Activated B cell treated with CpG ODN at 0.5 μM for 24 hours (primary cell): ENCODE measurements at regions of chr10 and their contacts with region 1.

Region 1: DNA sequence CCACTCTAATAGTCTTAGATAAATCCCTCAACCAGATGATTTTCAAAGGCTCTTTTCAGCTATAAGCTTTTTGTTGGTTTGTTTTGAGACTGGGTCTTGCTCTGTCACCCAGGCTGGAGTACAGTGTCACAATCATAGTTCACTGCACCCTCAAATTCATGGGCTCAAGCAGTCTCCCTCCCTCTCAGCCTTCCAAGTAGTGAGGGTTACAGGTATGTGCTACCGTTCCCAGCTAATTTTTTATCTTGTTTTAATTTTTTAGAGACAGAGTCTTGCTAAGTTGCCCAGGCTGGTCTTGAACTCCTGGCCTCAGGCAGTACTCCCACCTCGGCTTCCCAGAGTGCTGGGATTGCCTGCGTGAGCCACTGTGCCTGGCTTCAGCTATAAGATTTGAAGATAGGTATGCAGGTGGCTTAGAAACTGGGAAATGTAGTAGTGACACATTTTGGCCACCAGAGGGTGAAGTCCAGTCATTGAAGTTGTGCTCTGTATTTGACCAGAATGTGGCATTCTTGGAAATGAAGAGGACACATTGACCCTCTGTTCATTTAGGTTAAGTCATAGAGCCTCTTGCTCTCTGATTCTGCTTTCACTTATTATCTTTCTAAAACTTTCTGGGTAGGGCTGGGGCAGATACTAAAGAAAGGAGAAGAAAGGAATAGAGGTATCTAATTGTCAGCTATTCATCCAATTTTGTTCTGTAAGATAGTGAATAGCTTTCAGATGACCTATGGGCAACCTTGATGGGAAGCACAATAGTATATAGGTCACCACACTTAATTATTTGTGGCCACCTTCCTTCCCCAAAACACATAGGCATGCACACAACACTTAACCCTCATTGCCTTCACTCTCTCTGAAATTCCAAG is 36.0 kb downstream of the R3HCC1L start:
- DNase-seq: no peak
- ATAC-seq: peak; percentile 58
- H3K4me3 Mint-ChIP-seq: no peak overlapping the region
- H3K27ac Mint-ChIP-seq: no peak overlapping the region
- H3K4me1 Mint-ChIP-seq: peaks cover 39% of the 10 kb centered on the region
- H3K27me3 Mint-ChIP-seq: no peaks in the 10 kb centered on the region
- CTCF ChIP-seq: peak; percentile 82

Region 2: DNA sequence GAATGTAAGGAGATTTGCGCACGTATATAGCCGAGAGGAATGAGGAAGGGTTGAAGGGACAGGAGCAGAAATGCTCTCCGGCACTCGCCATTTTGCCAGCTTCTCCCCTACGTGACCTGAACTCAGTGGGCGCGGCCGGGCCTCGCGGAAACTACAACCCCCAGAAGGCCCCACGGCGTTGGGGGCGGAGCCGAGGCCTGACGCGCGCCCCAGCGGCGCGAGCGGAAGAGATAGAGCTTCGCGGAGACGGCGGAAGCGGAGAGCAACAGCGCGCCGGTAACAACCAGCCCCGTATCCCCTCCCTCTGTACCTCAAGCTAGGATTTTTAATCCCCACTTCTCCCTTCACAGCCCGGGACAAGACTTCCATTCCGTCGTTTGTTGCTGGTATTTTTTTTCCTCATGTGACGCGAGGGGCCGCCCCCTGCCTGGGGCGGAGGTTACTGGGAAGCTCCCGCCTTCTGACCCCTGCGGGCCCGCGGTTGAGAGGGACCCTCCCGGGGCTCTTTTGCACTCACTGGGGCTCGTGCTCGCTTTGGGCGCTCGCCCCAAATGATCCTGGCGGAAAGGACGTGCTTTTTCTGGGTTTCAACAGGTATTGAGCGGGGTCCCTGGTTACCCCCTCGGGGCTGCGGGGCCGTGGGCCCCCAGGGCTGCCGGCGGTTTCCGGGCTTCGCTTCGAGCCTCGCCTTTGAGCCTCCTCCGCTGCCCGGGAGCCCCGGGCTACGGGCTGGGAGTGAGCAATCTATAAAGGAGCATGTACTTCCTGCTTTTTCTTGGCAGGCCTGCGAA is 35.9 kb before region 1 on chr10 and contains the start of gene R3HCC1L:
- CTCF ChIA-PET with region 1: interaction called, 6 read pairs
- POLR2A ChIA-PET with region 1: interaction called, 6 read pairs
- intact Hi-C with region 1: loop called (anchors 2 kb)
- DNase-seq: peak; percentile 93
- ATAC-seq: peak; percentile 91
- H3K4me3 Mint-ChIP-seq: peak within 1 kb of the TSS; percentile 94
- H3K27ac Mint-ChIP-seq: peak within 1 kb of the TSS; percentile 97
- H3K4me1 Mint-ChIP-seq: peaks cover 63% of the 10 kb centered on the region
- H3K27me3 Mint-ChIP-seq: no peaks in the 10 kb centered on the region
- CTCF ChIP-seq: no peak
- total RNA-seq, gene R3HCC1L: 24.4 and 24.9 TPM in 2 replicates